ENCODE measurements at regions of chr2 and their contacts with region 1.

Region 1: DNA sequence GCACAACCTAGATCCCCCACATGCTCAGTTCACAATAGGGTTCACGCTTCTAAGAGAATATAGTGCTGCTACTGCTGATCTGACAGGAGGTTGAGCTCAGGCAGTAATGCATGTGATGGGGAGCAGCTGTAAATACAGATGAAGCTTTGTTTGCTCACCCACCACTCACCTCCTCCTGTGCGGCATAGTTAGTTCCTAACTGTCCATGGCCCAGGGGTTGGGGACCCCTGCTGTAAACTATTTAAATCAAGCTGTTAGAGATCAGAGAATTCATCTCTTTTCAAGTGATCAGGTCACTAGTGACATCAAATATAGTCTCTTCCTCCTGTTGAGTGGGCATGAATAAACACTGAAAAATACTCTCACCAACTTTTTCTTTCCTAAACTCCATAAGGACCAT is 88.7 kb upstream of the ACVR2A start:
- DNase-seq: no peak
- ATAC-seq: no peak
- H3K4me3 ChIP-seq: no peak overlapping the region
- H3K4me3 Mint-ChIP-seq: no peak overlapping the region
- H3K27ac ChIP-seq: no peak overlapping the region
- H3K27ac Mint-ChIP-seq: no peak overlapping the region
- H3K4me1 ChIP-seq: no peaks in the 10 kb centered on the region
- H3K4me1 Mint-ChIP-seq: no peaks in the 10 kb centered on the region
- H3K27me3 ChIP-seq: no peaks in the 10 kb centered on the region
- H3K27me3 Mint-ChIP-seq: no peaks in the 10 kb centered on the region
- CTCF ChIP-seq: no peak

Region 2: GRCh38 chr2:147779440-147779839 is 23.3 kb after region 1 on chr2:
- CTCF ChIA-PET with region 1: no interaction called
- POLR2A ChIA-PET with region 1: no interaction called
- intact Hi-C with region 1: loop called (anchors 1 kb)
- DNase-seq: no peak
- ATAC-seq: no peak
- H3K4me3 ChIP-seq: no peak overlapping the region
- H3K4me3 Mint-ChIP-seq: no peak overlapping the region
- H3K27ac ChIP-seq: no peak overlapping the region
- H3K27ac Mint-ChIP-seq: no peak overlapping the region
- H3K4me1 ChIP-seq: no peaks in the 10 kb centered on the region
- H3K4me1 Mint-ChIP-seq: no peaks in the 10 kb centered on the region
- H3K27me3 ChIP-seq: no peaks in the 10 kb centered on the region
- H3K27me3 Mint-ChIP-seq: peaks cover 5% of the 10 kb centered on the region
- CTCF ChIP-seq: no peak